ENCODE measurements at regions of chr1 and their contacts with region 1.

Region 1: GRCh38 chr1:114670083-114671010 is 498 bp upstream of the DENND2C start:
- DNase-seq: peak; percentile 86
- H3K4me3 Mint-ChIP-seq: peak overlapping the region; percentile 75
- H3K27ac Mint-ChIP-seq: peak overlapping the region; percentile 59
- H3K4me1 Mint-ChIP-seq: peaks cover 8% of the 10 kb centered on the region
- H3K27me3 Mint-ChIP-seq: peaks cover 12% of the 10 kb centered on the region
- CTCF ChIP-seq: no peak

Region 2: DNA sequence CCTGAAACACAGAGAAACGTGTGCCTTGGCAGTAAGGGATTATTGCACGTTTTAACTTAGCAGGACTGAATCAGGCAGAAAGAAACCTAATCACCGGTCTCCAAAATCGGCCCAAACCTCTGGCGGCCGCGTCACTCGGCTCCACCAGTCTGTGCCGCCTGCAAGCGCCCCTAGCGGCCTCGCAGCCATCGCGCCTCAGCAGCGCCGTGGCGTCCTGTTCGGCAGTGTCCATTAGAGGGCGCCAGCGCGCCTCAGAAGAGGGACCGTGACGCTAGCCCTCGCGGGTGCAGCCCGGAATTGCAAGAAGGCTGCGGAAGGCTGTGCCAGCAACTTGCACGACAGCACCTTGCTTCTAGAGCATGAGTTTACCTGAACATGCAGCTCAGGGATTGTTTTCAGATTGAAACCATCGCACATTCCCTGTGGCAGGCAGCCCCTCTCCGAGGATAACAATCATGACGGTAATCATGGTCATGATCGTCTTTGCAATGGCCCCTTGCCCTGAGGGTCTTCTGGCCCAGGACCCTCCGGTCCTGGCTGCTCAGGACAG is 323.8 kb before region 1 on chr1:
- CTCF ChIA-PET with region 1: interaction called, 5 read pairs
- intact Hi-C with region 1: loop called (anchors 2 kb)
- DNase-seq: peak; percentile 93
- H3K4me3 Mint-ChIP-seq: peak overlapping the region; percentile 84
- H3K27ac Mint-ChIP-seq: peak overlapping the region; percentile 52
- H3K4me1 Mint-ChIP-seq: peaks cover 8% of the 10 kb centered on the region
- H3K27me3 Mint-ChIP-seq: peaks cover 24% of the 10 kb centered on the region
- CTCF ChIP-seq: peak; percentile 95

Region 3: DNA sequence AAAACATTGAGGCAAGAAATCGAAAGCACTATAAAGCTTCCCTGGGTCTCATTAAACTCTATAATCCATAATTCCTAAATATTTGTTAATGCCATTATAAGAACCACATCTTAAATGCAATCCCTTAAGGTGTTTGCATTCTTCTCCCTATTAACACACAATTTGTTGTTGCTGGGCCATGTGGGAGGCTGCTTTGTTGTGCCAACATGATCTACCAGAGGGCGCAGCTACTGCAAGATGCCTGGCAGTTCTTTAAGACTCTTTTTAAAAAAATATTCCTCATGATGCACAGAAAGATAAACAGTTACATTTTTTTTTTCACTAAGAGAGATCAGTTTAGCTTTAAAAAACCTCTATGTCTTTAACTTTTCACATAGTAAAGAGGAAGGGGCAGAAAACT is 49.9 kb before region 1 on chr1:
- CTCF ChIA-PET with region 1: no interaction called
- intact Hi-C with region 1: loop called (anchors 2 kb)
- DNase-seq: no peak
- H3K4me3 Mint-ChIP-seq: no peak overlapping the region
- H3K27ac Mint-ChIP-seq: no peak overlapping the region
- H3K4me1 Mint-ChIP-seq: no peaks in the 10 kb centered on the region
- H3K27me3 Mint-ChIP-seq: no peaks in the 10 kb centered on the region
- CTCF ChIP-seq: no peak

Region 4: DNA sequence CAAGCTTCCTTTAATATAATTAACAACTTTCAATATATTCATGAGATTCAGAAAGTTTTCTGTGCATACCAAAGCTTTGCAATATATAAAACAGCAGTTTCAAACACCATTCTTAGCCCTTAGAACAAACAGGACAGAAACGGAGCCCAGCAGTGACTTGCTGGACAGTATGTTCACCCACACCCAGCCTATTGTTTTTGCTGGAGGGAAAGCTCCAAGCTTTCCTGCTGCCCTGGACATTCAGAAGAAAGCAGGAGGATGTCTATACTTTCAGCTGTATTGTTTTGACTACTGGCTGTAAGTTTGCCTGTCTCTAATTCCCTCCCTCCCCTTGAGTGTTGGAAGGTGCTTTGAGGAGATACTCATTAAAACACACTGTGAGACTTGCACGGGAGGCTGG is 10.1 kb before region 1 on chr1:
- CTCF ChIA-PET with region 1: interaction called, 14 read pairs
- intact Hi-C with region 1: no loop called
- DNase-seq: no peak
- H3K4me3 Mint-ChIP-seq: no peak overlapping the region
- H3K27ac Mint-ChIP-seq: no peak overlapping the region
- H3K4me1 Mint-ChIP-seq: no peaks in the 10 kb centered on the region
- H3K27me3 Mint-ChIP-seq: peaks cover 12% of the 10 kb centered on the region
- CTCF ChIP-seq: no peak

Region 5: GRCh38 chr1:114695430-114696058 is 25.2 kb after region 1 on chr1 and contains the start of gene AMPD1:
- CTCF ChIA-PET with region 1: interaction called, 10 read pairs
- intact Hi-C with region 1: no loop called
- DNase-seq: no peak
- H3K4me3 Mint-ChIP-seq: no peak within 1 kb of the TSS
- H3K27ac Mint-ChIP-seq: no peak within 1 kb of the TSS
- H3K4me1 Mint-ChIP-seq: no peaks in the 10 kb centered on the region
- H3K27me3 Mint-ChIP-seq: peaks cover 6% of the 10 kb centered on the region
- CTCF ChIP-seq: no peak
- total RNA-seq, gene AMPD1: not detected in 2 replicates